ENCODE measurements at regions of chr16 and their contacts with region 1.

Region 1: GRCh38 chr16:4416200-4417032 is at the start of gene CORO7:
- DNase-seq: peak; percentile 98
- H3K4me3 Mint-ChIP-seq: peak within 1 kb of the TSS; percentile 88
- H3K27ac Mint-ChIP-seq: peak within 1 kb of the TSS; percentile 88
- H3K4me1 Mint-ChIP-seq: peaks cover 33% of the 10 kb centered on the region
- H3K27me3 Mint-ChIP-seq: no peaks in the 10 kb centered on the region
- total RNA-seq, gene CORO7: 90.4 to 101 TPM

Region 2: GRCh38 chr16:4271176-4272066 is 145.0 kb before region 1 on chr16:
- CTCF ChIA-PET with region 1: interaction called, 3 read pairs
- POLR2A ChIA-PET with region 1: interaction called, 4 read pairs
- intact Hi-C with region 1: loop called (anchors 10 kb)
- DNase-seq: peak; percentile 94
- H3K4me3 Mint-ChIP-seq: peak overlapping the region; percentile 86
- H3K27ac Mint-ChIP-seq: peak overlapping the region; percentile 93
- H3K4me1 Mint-ChIP-seq: peaks cover 14% of the 10 kb centered on the region
- H3K27me3 Mint-ChIP-seq: no peaks in the 10 kb centered on the region

Region 3: DNA sequence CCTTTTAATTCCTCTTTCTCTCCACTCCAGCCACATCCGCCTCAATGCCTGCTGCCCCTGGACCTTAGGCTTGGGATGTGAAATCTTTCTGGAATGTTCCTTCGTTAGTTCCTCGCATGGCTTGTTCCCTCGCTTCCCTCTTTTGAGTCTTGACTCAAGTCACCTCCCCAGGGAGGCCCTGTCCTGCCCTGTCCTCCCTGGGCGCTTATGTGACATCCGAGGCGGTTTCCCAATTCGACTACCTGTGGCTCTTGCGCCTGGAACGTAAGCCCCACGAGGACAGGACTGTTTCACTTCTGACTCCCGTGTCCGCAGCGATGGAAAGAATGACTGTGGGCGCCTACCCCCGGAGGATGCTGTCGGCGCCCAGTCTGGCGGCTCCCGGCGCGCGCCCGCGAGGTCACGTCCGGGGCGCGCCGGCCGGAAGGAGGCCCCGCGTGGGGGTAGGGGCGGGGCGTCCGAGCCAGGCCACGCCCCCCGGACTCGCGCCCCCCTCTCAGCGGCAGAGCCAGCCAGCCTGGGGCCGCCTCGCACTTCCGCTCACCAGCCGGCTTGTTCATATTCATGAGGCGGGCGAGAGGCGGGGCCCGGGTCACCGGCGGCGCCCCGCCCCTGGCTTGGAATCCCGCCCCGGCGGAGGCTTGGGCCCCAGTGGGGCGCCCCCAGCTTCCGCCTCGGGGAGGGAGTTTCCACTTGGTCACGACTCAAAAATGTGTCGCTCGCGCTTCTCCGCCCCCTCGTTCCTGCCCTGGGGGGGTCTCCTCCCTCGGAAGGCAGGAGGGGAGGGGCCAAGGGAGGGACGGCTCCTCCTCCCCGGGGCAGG is 109.0 kb before region 1 on chr16:
- CTCF ChIA-PET with region 1: no interaction called
- POLR2A ChIA-PET with region 1: no interaction called
- intact Hi-C with region 1: loop called (anchors 5 kb)
- DNase-seq: peak; percentile 97
- H3K4me3 Mint-ChIP-seq: peak overlapping the region; percentile 90
- H3K27ac Mint-ChIP-seq: peak overlapping the region; percentile 90
- H3K4me1 Mint-ChIP-seq: peaks cover 33% of the 10 kb centered on the region
- H3K27me3 Mint-ChIP-seq: no peaks in the 10 kb centered on the region

Region 4: GRCh38 chr16:4384509-4384942 is 31.9 kb before region 1 on chr16:
- CTCF ChIA-PET with region 1: no interaction called
- POLR2A ChIA-PET with region 1: no interaction called
- intact Hi-C with region 1: no loop called
- DNase-seq: no peak
- H3K4me3 Mint-ChIP-seq: no peak overlapping the region
- H3K27ac Mint-ChIP-seq: no peak overlapping the region
- H3K4me1 Mint-ChIP-seq: peaks cover 2% of the 10 kb centered on the region
- H3K27me3 Mint-ChIP-seq: no peaks in the 10 kb centered on the region

Region 5: DNA sequence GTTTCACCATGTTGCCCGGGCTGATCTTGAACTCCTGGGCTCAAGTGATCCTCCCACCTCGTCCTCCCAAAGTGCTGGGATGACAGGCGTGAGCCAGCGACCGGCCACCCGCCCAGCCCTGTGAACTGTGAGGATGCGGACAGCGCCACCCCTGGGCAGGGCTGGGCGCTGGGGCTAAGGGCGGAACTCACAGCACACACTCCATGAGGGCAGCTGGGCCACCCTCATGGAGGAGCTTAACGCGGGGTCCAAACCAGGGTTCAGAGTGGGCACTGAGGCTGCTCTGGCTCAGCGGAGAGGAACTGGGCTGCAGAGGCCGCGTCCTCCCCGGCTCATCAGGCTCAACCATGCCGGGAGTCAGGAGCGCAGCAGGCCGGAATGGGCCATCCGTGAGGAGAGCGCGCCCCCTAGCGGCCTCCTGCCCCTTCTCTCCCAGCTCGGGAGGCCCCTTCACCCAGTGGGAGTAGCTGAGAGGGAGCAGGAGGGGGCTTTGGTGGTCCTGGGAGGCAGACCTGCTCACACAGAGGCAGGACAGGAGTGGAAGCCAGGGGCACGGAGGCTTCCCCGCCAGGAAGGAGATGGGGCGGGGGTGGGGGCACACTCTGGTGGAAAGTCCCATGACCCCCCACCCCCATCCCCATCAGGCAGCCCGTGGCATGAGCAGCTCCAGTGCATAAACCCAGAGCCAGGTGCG is 13.8 kb before region 1 on chr16:
- CTCF ChIA-PET with region 1: interaction called, 67 read pairs
- POLR2A ChIA-PET with region 1: interaction called, 6 read pairs
- intact Hi-C with region 1: no loop called
- DNase-seq: peak; percentile 74
- H3K4me3 Mint-ChIP-seq: no peak overlapping the region
- H3K27ac Mint-ChIP-seq: no peak overlapping the region
- H3K4me1 Mint-ChIP-seq: no peaks in the 10 kb centered on the region
- H3K27me3 Mint-ChIP-seq: no peaks in the 10 kb centered on the region

Region 6: GRCh38 chr16:4538350-4539235 is 122.2 kb after region 1 on chr16 and contains the start of gene CDIP1:
- CTCF ChIA-PET with region 1: no interaction called
- POLR2A ChIA-PET with region 1: interaction called, 4 read pairs
- intact Hi-C with region 1: loop called (anchors 5 kb)
- DNase-seq: peak; percentile 99
- H3K4me3 Mint-ChIP-seq: peak within 1 kb of the TSS; percentile 72
- H3K27ac Mint-ChIP-seq: peak within 1 kb of the TSS; percentile 12
- H3K4me1 Mint-ChIP-seq: peaks cover 33% of the 10 kb centered on the region
- H3K27me3 Mint-ChIP-seq: no peaks in the 10 kb centered on the region
- total RNA-seq, gene CDIP1: 25.7 to 27.5 TPM

Region 7: GRCh38 chr16:4616047-4616811 is 199.8 kb after region 1 on chr16:
- CTCF ChIA-PET with region 1: no interaction called
- POLR2A ChIA-PET with region 1: no interaction called
- intact Hi-C with region 1: loop called (anchors 2 kb)
- DNase-seq: peak; percentile 100
- H3K4me3 Mint-ChIP-seq: peak overlapping the region; percentile 88
- H3K27ac Mint-ChIP-seq: peak overlapping the region; percentile 95
- H3K4me1 Mint-ChIP-seq: peaks cover 23% of the 10 kb centered on the region
- H3K27me3 Mint-ChIP-seq: no peaks in the 10 kb centered on the region

Region 8: GRCh38 chr16:4624015-4624826 is 207.8 kb after region 1 on chr16 and contains the start of gene MGRN1:
- CTCF ChIA-PET with region 1: no interaction called
- POLR2A ChIA-PET with region 1: no interaction called
- intact Hi-C with region 1: loop called (anchors 2 kb)
- DNase-seq: peak; percentile 96
- H3K4me3 Mint-ChIP-seq: peak within 1 kb of the TSS; percentile 99
- H3K27ac Mint-ChIP-seq: peak within 1 kb of the TSS; percentile 98
- H3K4me1 Mint-ChIP-seq: peaks cover 28% of the 10 kb centered on the region
- H3K27me3 Mint-ChIP-seq: no peaks in the 10 kb centered on the region
- total RNA-seq, gene MGRN1: 72.7 to 73.2 TPM